Activated CD4-positive, alpha-beta T cell treated with anti-CD3 and anti-CD28 coated beads, Interleukin-2, amount 10 ng/mL, durations not matched to agents 24 days and 14 days (primary cell): ENCODE measurements at regions of chr13 and their contacts with region 1.

Region 1: DNA sequence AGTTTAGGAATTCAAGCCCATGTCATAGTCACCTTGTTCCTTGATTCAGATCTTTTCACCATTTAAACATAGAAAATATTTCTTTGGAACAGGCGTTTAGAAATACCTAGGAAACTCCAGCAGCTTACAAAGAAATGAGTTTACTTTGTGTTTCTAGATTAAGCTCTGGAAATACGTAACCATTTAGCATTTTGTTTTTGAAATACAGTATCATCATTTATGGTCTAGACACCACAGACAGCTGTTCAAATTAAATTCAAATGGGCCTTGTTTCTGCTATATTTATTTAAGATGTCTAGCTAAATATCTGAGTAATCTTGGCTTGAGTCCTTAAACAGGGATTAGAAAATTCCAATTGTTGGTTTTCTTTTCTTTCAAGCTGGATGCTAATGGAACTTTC is 228.5 kb downstream of the NDFIP2 start:
- DNase-seq: no peak
- H3K4me3 Mint-ChIP-seq: no peak overlapping the region
- H3K27ac Mint-ChIP-seq: no peak overlapping the region
- H3K4me1 Mint-ChIP-seq: no peaks in the 10 kb centered on the region
- H3K27me3 Mint-ChIP-seq: peaks cover 2% of the 10 kb centered on the region

Region 2: GRCh38 chr13:78589206-78589605 is 1120.3 kb before region 1 on chr13:
- intact Hi-C with region 1: loop called (anchors 5 kb)
- DNase-seq: peak; percentile 63
- H3K4me3 Mint-ChIP-seq: no peak overlapping the region
- H3K27ac Mint-ChIP-seq: no peak overlapping the region
- H3K4me1 Mint-ChIP-seq: peaks cover 4% of the 10 kb centered on the region
- H3K27me3 Mint-ChIP-seq: peaks cover 72% of the 10 kb centered on the region

Region 3: GRCh38 chr13:79108914-79109643 is 600.4 kb before region 1 on chr13:
- intact Hi-C with region 1: no loop called
- DNase-seq: no peak
- H3K4me3 Mint-ChIP-seq: no peak overlapping the region
- H3K27ac Mint-ChIP-seq: no peak overlapping the region
- H3K4me1 Mint-ChIP-seq: no peaks in the 10 kb centered on the region
- H3K27me3 Mint-ChIP-seq: peaks cover 8% of the 10 kb centered on the region